PC-9 (cell line): ENCODE measurements at regions of chr18 and their contacts with region 1.

Region 1: DNA sequence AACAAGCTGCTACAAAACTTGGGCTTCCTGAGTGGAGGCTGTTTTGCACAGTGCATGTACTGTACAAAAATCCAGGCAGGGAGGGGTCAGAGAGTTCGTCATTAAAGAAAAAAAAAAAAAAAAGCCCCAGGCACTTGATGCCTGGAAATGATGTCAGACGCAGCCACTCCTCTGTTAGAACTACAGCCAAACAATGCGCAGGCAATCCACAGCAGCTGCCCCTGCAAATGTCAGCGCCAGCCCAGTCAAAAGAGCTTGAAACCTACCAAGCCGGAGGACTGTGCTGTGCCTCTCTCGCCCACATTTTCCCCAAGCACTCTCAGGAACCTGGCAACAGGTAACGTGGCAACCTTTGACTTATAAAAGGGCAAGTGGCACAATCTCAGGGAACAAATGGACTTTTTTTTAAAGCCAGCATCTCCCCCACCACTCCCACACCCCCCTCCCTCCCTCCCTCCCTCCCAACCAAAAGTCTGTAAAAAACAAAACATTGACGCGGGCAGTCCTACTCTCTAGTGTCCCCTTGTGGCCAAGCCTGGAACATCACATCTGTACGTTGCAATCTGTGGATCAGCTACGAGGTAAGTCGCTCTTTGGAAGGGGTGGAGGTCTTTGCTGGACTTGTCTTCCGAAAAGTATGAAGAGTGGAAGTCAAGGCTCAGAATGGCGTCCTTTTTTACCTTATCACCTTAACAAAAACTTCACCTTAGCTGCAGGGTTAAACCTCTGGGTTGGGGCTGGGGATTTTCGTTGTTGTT is 144.1 kb downstream of the TGIF1 start:
- DNase-seq: peak; percentile 91 to 93
- H3K4me3 ChIP-seq: peak overlapping the region; percentile 69
- H3K27ac ChIP-seq: peak overlapping the region; percentile 100
- H3K4me1 ChIP-seq: peaks cover 77% of the 10 kb centered on the region
- H3K27me3 ChIP-seq: no peaks in the 10 kb centered on the region
- CTCF ChIP-seq: peak; percentile 88

Region 2: GRCh38 chr18:3321133-3321812 is 272.8 kb before region 1 on chr18:
- CTCF ChIA-PET with region 1: no interaction called
- POLR2A ChIA-PET with region 1: interaction called, 8 read pairs
- intact Hi-C with region 1: loop called (anchors 2 kb)
- DNase-seq: peak; percentile 88 to 93
- H3K4me3 ChIP-seq: no peak overlapping the region
- H3K27ac ChIP-seq: peak overlapping the region; percentile 74
- H3K4me1 ChIP-seq: peaks cover 32% of the 10 kb centered on the region
- H3K27me3 ChIP-seq: no peaks in the 10 kb centered on the region
- CTCF ChIP-seq: no peak

Region 3: DNA sequence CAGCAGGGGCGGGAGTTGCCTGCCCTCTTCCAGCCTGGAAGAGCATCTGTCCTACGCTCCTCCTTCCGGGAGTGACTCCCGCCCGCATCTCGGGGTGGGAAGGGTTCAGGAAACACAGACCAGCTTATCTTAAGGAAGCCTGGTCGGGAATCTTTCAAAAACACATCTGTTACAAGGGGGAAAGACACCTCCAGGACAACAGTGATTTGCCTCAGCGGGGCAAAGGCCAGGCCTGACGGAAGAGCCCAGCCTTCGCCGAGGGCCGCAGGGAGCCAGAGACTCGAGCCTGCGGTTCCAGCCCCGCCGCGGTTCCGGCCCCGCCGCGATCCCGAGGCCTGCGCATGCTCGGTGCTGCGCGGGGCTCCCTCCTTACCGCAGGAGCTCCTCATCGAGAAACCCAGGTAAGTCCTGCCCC is 182.2 kb before region 1 on chr18:
- CTCF ChIA-PET with region 1: no interaction called
- POLR2A ChIA-PET with region 1: interaction called, 3 read pairs
- intact Hi-C with region 1: loop called (anchors 1 kb)
- DNase-seq: peak; percentile 72 to 86
- H3K4me3 ChIP-seq: peak overlapping the region; percentile 68
- H3K27ac ChIP-seq: peak overlapping the region; percentile 96
- H3K4me1 ChIP-seq: peaks cover 58% of the 10 kb centered on the region
- H3K27me3 ChIP-seq: no peaks in the 10 kb centered on the region
- CTCF ChIP-seq: no peak

Region 4: GRCh38 chr18:3466045-3466444 is 128.0 kb before region 1 on chr18:
- CTCF ChIA-PET with region 1: interaction called, 12 read pairs
- POLR2A ChIA-PET with region 1: interaction called, 22 read pairs
- intact Hi-C with region 1: no loop called
- DNase-seq: no peak
- H3K4me3 ChIP-seq: no peak overlapping the region
- H3K27ac ChIP-seq: peak overlapping the region; percentile 25; the same call in 1 of the 2 replicates
- H3K4me1 ChIP-seq: no peaks in the 10 kb centered on the region
- H3K27me3 ChIP-seq: no peaks in the 10 kb centered on the region
- CTCF ChIP-seq: no peak

Region 5: GRCh38 chr18:3623769-3624545 is 29.9 kb after region 1 on chr18:
- CTCF ChIA-PET with region 1: no interaction called
- POLR2A ChIA-PET with region 1: interaction called, 10 read pairs
- intact Hi-C with region 1: loop called (anchors 1 kb)
- DNase-seq: peak; percentile 94 to 98
- H3K4me3 ChIP-seq: peak overlapping the region; percentile 58
- H3K27ac ChIP-seq: peak overlapping the region; percentile 100
- H3K4me1 ChIP-seq: peaks cover 62% of the 10 kb centered on the region
- H3K27me3 ChIP-seq: no peaks in the 10 kb centered on the region
- CTCF ChIP-seq: no peak

Region 6: DNA sequence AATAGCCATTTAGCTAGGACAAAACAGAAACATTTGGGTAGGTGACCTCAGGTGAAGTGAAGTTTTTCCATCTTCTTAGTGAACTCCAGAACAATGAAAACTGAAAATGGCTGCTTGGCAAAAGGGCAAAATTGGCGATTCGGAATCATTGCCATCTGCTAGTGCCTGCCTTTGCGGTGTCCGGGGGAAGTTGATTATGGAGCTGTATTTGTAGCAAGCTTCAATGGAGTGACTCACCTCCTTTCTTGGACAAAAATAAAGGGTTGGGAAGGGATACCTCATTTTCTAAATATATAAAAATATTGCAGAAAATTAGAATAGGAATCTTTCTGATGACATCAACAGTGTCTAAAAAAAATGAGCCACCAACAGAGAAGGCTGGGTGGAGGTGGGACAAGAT is 316.4 kb after region 1 on chr18:
- CTCF ChIA-PET with region 1: no interaction called
- POLR2A ChIA-PET with region 1: no interaction called
- intact Hi-C with region 1: no loop called
- DNase-seq: no peak
- H3K4me3 ChIP-seq: no peak overlapping the region
- H3K27ac ChIP-seq: no peak overlapping the region
- H3K4me1 ChIP-seq: no peaks in the 10 kb centered on the region
- H3K27me3 ChIP-seq: no peaks in the 10 kb centered on the region
- CTCF ChIP-seq: no peak

Region 7: GRCh38 chr18:3995476-3996102 is 401.5 kb after region 1 on chr18:
- CTCF ChIA-PET with region 1: interaction called, 5 read pairs
- POLR2A ChIA-PET with region 1: no interaction called
- intact Hi-C with region 1: loop called (anchors 2 kb)
- DNase-seq: peak in 1 of 2 experiments; percentile 45
- H3K4me3 ChIP-seq: no peak overlapping the region
- H3K27ac ChIP-seq: no peak overlapping the region
- H3K4me1 ChIP-seq: no peaks in the 10 kb centered on the region
- H3K27me3 ChIP-seq: no peaks in the 10 kb centered on the region
- CTCF ChIP-seq: peak; percentile 89